ENCODE measurements at regions of chr1 and their contacts with region 1.

Region 1: DNA sequence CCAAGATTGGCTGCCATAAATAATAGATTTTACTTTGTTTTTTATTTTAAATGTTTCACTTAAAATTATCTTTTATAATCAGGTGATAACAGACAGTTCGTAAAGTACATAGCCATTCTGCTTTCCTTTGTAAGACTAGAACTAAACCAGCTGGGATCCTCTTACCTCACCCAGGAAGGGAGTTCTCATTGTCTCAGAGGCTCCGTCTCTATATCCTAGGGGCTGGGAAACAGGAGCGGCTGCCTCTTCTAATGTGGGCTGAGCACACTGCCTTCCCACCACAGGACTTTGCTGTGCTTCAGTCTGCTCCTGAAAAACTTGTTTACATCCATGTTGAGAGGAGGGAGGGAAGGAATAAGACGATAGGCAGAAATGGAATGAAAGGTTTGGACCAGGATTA is 45.6 kb upstream of the PGD start:
- DNase-seq: no peak
- H3K4me3 ChIP-seq: peak overlapping the region in 1 of 4 experiments; percentile 14; a peak in 1 of 8 replicates
- H3K27ac ChIP-seq: no peak overlapping the region
- H3K4me1 ChIP-seq: peaks cover 0 to 6% (median 4%) of the 10 kb centered on the region in 4 experiments; a peak in 5 of 7 replicates
- H3K27me3 ChIP-seq: no peaks in the 10 kb centered on the region
- CTCF ChIP-seq: no peak
- EP300 ChIP-seq: no peak
- POLR2A ChIP-seq: no peak
- RAD21 ChIP-seq: no peak

Region 2: DNA sequence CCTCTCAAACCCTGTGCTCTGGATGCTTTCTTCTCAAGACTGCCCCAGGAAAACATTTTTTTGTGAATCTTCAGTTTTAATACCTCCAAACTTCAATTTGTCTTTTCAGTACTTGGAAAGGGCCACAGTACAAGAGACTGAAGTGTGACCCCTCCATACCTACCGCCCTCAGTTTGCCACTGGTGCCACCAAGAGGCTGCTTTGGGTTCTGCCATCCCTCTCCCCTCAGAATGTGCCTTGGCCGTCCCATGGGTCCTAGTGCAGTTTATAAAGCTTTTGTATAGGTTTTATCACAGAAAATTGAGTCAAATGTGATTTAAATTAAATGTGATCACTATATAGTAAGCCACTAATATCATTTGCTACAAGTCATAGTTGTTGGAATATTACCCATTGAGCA is 15.2 kb before region 1 on chr1:
- CTCF ChIA-PET with region 1: interaction called, 10 read pairs
- POLR2A ChIA-PET with region 1: no interaction called
- DNase-seq: peak; percentile 7 to 62
- H3K4me3 ChIP-seq: no peak overlapping the region
- H3K27ac ChIP-seq: no peak overlapping the region
- H3K4me1 ChIP-seq: peaks cover 0 to 7% (median 1%) of the 10 kb centered on the region in 4 experiments; a peak in 3 of 7 replicates
- H3K27me3 ChIP-seq: no peaks in the 10 kb centered on the region
- CTCF ChIP-seq: peak; percentile 74 to 91 (median 85)
- EP300 ChIP-seq: no peak
- POLR2A ChIP-seq: no peak
- RAD21 ChIP-seq: peak; percentile 89 to 91